Psoas muscle (tissue), 8 donors: ENCODE measurements at regions of chr21 and their contacts with region 1.

Region 1: DNA sequence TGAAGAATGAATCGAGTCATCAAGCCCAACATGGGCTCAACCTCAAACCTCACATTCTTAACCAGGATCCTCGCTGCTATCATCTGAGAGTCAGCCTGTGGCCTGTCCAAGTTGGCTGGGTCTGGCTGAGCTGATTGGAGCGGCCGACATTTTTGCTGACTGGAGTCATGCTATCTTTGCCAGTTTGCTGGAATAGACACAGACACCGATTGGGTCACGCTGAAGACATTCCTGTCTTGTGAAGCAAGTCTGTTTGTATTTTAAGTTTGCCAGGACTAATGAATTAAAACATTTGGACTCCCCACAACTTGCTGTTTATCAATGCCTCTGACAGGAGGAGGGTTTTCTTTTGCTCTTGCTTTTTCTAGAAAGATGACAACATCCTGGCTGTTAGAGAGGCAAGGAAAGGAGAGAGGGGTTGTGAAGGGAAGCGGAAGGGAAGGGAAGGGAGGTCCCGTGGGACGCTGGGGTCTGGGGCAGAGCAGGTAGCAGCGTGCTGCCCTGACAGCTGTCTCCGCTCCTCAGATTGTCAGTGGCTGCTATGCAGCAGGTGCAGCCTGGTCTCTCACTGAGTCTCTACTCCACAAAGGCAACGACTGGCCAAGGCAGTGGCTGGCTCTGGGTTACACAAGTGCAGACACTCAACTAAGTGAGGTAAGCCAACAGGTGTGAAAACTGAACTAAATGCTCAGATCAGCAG is at the start of gene MAP3K7CL:
- DNase-seq: peak; percentile 79 to 87
- ATAC-seq: peak; percentile 94 to 97 (median 96)
- H3K4me3 ChIP-seq: peak within 1 kb of the TSS; percentile 61
- H3K27ac ChIP-seq: peak within 1 kb of the TSS; percentile 91
- H3K4me1 ChIP-seq: peaks cover 23% of the 10 kb centered on the region
- H3K27me3 ChIP-seq: no peaks in the 10 kb centered on the region
- CTCF ChIP-seq: no peak
- total RNA-seq, gene MAP3K7CL: 15.3 to 107 (median 23.7) TPM

Region 2: GRCh38 chr21:28537371-28538079 is 592.9 kb before region 1 on chr21:
- intact Hi-C with region 1: no loop called
- DNase-seq: no peak
- ATAC-seq: no peak
- H3K4me3 ChIP-seq: no peak overlapping the region
- H3K27ac ChIP-seq: no peak overlapping the region
- H3K4me1 ChIP-seq: no peaks in the 10 kb centered on the region
- H3K27me3 ChIP-seq: no peaks in the 10 kb centered on the region
- CTCF ChIP-seq: no peak

Region 3: DNA sequence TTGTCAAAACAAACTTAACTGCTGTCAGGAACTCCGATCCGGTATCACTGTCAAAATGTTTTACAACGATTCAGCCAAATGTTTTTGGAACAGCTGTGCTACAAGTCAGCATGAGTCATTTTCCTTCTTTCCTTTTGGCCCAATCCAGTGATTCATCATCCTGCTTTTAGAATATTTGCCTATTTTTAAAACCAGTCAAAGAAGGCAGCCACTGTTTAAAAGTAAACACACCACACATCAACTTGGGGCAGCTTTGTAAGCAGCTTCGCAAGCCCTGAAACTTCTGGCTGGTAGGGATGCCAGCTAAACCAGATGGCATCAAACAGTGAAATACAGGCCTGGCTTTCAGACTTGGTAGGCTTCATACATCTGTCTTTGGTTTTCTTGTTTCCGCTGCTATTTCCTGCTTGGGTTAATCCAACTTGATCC is 14.9 kb after region 1 on chr21:
- intact Hi-C with region 1: loop called (anchors 1 to 2 kb)
- DNase-seq: peak in 1 of 2 donors; percentile 63
- ATAC-seq: peak; percentile 80 to 93 (median 90)
- H3K4me3 ChIP-seq: peak overlapping the region; percentile 53
- H3K27ac ChIP-seq: peak overlapping the region; percentile 89
- H3K4me1 ChIP-seq: peaks cover 64% of the 10 kb centered on the region
- H3K27me3 ChIP-seq: no peaks in the 10 kb centered on the region
- CTCF ChIP-seq: no peak